Activated CD4-positive, alpha-beta T cell treated with anti-CD3 and anti-CD28 coated beads, Interleukin-2, amount 10 ng/mL, durations not matched to agents 24 days and 14 days (primary cell): ENCODE measurements at regions of chr15 and their contacts with region 1.

Region 1: DNA sequence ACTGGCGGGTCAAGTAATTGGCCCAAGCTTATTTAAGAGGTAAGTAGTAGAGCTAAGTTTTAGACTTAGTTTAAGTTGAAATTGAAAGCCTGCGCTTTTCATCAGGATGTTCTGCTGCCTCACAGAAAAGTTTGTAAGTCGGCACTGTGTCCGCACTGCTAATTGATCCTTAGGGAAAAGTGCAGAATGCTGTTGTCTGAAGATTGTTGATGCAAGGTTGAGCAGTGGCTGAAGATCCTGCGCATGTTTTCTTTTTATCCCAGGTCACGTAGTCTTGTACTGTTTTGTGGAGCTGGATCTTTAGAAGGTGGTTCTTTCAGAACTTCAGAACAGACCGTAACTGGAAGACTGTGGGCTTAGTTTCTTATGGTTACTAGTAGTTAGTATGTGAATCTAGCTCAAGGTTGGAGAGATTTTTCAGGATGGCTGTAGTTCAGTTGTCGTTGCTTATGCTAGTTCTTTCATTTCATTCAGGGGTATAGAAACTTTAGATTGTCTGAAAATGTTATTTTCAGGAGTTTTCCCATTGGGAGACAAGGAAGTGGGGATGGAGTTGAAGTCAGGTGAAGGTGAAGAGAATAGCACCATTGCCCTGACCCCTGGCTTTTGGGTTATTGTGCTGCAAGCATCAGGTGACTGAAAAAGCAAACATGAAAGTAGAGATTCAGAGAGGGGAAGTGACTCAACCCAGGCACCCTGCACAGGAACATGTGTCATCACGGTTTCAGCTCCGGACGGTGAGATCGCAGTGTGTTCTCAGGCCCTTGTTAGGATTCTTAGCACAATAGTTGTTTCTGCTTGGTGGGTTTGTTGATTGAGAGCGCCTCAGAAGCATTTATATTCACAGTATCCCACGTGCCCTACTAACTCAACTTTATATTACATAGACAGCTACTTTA is 32.8 kb downstream of the AKAP13 start:
- DNase-seq: peak; percentile 91
- H3K4me3 Mint-ChIP-seq: peak overlapping the region; percentile 65
- H3K27ac Mint-ChIP-seq: peak overlapping the region; percentile 81
- H3K4me1 Mint-ChIP-seq: peaks cover 50% of the 10 kb centered on the region
- H3K27me3 Mint-ChIP-seq: no peaks in the 10 kb centered on the region

Region 2: GRCh38 chr15:85296615-85297402 is 116.4 kb before region 1 on chr15:
- intact Hi-C with region 1: loop called (anchors 1 kb)
- DNase-seq: peak; percentile 93
- H3K4me3 Mint-ChIP-seq: peak overlapping the region; percentile 60
- H3K27ac Mint-ChIP-seq: no peak overlapping the region
- H3K4me1 Mint-ChIP-seq: peaks cover 15% of the 10 kb centered on the region
- H3K27me3 Mint-ChIP-seq: no peaks in the 10 kb centered on the region

Region 3: GRCh38 chr15:85330901-85331588 is 82.2 kb before region 1 on chr15:
- intact Hi-C with region 1: loop called (anchors 1 kb)
- DNase-seq: peak; percentile 92
- H3K4me3 Mint-ChIP-seq: peak overlapping the region; percentile 90
- H3K27ac Mint-ChIP-seq: peak overlapping the region; percentile 94
- H3K4me1 Mint-ChIP-seq: peaks cover 44% of the 10 kb centered on the region
- H3K27me3 Mint-ChIP-seq: no peaks in the 10 kb centered on the region

Region 4: DNA sequence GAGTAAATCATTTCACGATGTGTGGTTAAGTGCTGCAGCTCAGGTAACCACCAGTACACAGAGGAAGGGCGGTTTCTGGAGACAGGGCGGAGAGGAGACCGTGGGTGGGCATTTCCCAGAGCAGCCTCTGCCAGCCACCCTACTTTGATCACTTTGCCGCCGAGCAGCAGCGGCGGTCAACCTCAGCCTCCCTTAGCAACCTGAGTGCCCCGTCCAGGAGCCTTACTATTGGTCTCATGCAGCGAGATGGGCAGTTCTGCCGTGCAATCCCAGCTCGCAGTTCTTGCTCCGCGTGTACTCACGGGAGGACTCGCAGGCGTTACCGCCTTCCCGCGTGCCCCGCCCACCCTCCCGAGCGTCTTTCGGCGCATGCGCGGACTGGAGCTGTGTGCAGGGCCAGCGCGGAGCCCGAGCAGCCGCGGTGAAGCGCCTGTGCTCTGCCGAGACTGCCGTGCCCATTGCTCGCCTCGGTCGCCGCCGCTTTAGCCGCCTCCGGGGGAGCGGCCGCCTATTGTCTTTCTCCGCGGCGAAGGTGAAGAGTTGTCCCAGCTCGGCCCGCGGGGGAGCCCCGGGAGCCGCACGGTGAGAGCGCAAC is 32.9 kb before region 1 on chr15 and contains the start of gene AKAP13:
- intact Hi-C with region 1: loop called (anchors 1 kb)
- DNase-seq: peak; percentile 98
- H3K4me3 Mint-ChIP-seq: peak within 1 kb of the TSS; percentile 88
- H3K27ac Mint-ChIP-seq: peak within 1 kb of the TSS; percentile 93
- H3K4me1 Mint-ChIP-seq: peaks cover 51% of the 10 kb centered on the region
- H3K27me3 Mint-ChIP-seq: peaks cover 3% of the 10 kb centered on the region
- total RNA-seq, gene AKAP13: 68.5 and 71.3 TPM in 2 replicates

Region 5: GRCh38 chr15:85443593-85444087 is 30.4 kb after region 1 on chr15:
- intact Hi-C with region 1: loop called (anchors 2 kb)
- DNase-seq: peak; percentile 73
- H3K4me3 Mint-ChIP-seq: no peak overlapping the region
- H3K27ac Mint-ChIP-seq: peak overlapping the region; percentile 77
- H3K4me1 Mint-ChIP-seq: peaks cover 28% of the 10 kb centered on the region
- H3K27me3 Mint-ChIP-seq: no peaks in the 10 kb centered on the region

Region 6: GRCh38 chr15:85527895-85528294 is 114.7 kb after region 1 on chr15:
- intact Hi-C with region 1: no loop called
- DNase-seq: no peak
- H3K4me3 Mint-ChIP-seq: no peak overlapping the region
- H3K27ac Mint-ChIP-seq: no peak overlapping the region
- H3K4me1 Mint-ChIP-seq: peaks cover 22% of the 10 kb centered on the region
- H3K27me3 Mint-ChIP-seq: no peaks in the 10 kb centered on the region

Region 7: DNA sequence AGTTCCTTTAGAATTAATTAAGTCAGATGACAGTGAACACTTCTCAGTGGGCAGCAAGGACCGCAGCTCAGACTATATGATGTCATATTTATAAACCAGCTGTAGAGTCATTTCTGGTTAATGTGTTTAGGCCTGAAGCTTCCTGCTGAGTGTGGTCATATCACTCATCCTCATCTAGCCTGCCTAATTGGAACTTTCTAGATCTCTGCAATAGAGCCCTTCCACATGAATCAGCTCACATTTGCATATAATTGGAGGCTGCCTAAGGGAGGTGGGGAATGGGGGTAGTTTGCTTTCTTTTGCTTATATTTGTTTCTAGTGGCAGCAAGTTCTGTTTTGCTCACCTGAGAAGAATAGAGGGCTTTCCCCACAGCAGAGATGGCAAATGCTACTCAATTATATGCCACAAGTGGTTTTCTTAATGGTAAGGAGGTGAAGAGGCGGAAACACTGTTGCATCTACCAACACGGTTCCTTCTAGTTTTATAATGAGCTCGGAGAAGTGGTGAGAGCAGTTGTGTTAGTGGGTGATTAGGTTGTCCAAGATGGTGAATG is 233.4 kb after region 1 on chr15:
- intact Hi-C with region 1: loop called (anchors 5 kb)
- DNase-seq: peak; percentile 77
- H3K4me3 Mint-ChIP-seq: peak overlapping the region; percentile 52
- H3K27ac Mint-ChIP-seq: peak overlapping the region; percentile 94
- H3K4me1 Mint-ChIP-seq: peaks cover 34% of the 10 kb centered on the region
- H3K27me3 Mint-ChIP-seq: no peaks in the 10 kb centered on the region